Activated B cell treated with CpG ODN at 0.5 μM for 24 hours (primary cell): ENCODE measurements at regions of chr11 and their contacts with region 1.

Region 1: GRCh38 chr11:59158206-59159068 is 13.5 kb upstream of the DTX4 start:
- DNase-seq: no peak
- ATAC-seq: peak; percentile 99
- H3K4me3 Mint-ChIP-seq: peak overlapping the region; percentile 55
- H3K27ac Mint-ChIP-seq: peak overlapping the region; percentile 77
- H3K4me1 Mint-ChIP-seq: peaks cover 27% of the 10 kb centered on the region
- H3K27me3 Mint-ChIP-seq: no peaks in the 10 kb centered on the region
- CTCF ChIP-seq: no peak

Region 2: DNA sequence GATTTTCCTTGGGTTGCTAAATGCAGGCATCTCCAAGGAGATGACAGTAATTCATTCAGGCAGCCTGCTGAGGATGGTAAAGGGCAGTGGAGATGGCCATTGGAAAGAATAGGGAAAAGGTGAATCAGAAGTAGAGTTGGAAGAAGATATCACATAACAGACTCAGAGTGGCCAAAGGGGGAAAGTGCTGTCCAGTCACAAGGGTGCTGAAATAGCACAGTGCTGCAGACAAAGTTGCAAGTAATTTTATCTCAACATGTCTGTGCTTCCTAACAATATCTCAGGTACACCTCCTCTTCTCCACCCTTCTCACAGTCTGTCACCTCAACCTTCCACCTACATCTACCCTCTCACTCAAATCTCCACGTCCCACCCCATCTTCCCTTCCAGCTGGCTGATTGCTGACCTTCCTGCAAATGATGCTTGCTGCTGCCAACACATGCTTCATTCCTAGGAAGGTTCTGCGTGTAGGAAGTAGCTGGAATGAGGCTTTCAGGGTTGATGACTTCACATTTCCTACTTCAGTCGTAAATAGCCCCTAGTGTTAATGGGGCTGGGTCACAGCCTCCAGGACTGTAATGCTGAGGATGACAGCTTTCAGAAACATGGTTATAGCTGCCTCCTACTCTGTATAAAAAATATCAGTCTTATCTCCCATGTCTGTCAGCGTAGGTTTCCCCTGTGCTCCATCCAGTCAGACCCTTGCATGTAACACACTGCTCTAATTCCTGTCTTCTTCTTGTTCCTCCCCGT is 1273.0 kb before region 1 on chr11:
- CTCF ChIA-PET with region 1: no interaction called
- POLR2A ChIA-PET with region 1: no interaction called
- intact Hi-C with region 1: no loop called
- DNase-seq: no peak
- ATAC-seq: no peak
- H3K4me3 Mint-ChIP-seq: no peak overlapping the region
- H3K27ac Mint-ChIP-seq: no peak overlapping the region
- H3K4me1 Mint-ChIP-seq: no peaks in the 10 kb centered on the region
- H3K27me3 Mint-ChIP-seq: peaks cover 2% of the 10 kb centered on the region
- CTCF ChIP-seq: no peak

Region 3: DNA sequence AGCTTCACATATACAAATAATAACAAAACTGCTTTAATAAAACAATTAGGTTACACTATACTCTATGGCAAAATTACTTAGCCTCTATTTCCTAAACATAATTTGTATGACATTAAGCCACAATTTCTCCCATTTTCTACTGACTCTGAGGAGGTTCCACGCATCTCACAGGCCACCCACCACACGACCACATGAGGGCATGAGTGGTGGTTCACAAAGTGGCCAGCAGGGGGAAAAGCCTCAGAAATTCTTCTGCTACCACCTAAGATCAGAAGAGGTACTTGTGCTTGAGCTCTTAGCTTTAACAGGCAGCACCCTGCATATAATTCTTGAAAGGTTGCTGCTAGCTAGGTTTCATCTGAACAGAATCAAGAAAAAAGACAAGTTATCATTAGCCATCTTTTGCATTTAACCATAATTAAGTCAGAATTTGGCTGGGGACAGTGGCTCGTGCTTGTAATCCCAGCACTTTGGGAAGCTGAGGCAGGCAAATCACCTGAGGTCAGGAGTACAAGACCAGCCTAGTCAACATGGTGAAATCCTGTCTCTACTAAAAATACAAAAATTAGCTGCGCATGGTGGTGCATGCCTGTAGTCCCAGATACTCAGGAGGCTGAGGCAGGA is 590.4 kb before region 1 on chr11:
- CTCF ChIA-PET with region 1: interaction called, 19 read pairs
- POLR2A ChIA-PET with region 1: interaction called, 3 read pairs
- intact Hi-C with region 1: no loop called
- DNase-seq: peak; percentile 54
- ATAC-seq: peak; percentile 99
- H3K4me3 Mint-ChIP-seq: no peak overlapping the region
- H3K27ac Mint-ChIP-seq: peak overlapping the region; percentile 36
- H3K4me1 Mint-ChIP-seq: peaks cover 40% of the 10 kb centered on the region
- H3K27me3 Mint-ChIP-seq: no peaks in the 10 kb centered on the region
- CTCF ChIP-seq: peak; percentile 53

Region 4: DNA sequence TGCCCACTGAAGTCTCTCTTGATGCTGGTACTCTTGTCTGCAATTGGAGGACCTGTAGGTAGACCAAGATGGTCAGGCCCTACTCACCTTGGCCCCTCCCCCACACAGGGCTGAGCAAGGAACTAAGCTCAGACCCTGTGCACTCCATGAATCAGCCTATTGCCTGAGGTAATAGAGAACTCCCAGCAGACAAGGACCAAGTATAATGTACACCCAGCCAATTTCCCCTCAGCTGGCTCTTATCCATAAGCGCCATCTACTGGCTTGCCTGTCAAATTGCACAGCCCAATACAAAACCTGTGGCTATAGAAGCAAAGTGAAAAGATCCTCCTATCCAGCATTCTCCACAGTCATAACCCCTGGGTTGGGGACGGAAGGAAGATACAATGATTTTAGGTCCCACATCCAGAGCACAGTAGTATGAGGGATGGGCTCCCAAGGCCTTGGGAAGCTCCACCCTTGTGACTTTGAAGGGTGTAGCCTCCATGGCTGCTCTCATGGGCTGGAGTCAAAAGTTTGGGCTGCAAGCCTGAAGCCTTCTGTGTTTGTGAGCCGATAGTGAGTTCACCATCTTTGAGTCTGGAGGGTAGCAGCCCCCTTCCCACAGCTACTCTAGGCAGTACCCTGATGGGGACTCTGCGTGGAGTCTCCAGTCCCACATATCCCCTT is 369.9 kb before region 1 on chr11:
- CTCF ChIA-PET with region 1: interaction called, 7 read pairs
- POLR2A ChIA-PET with region 1: no interaction called
- intact Hi-C with region 1: loop called (anchors 5 kb)
- DNase-seq: no peak
- ATAC-seq: peak; percentile 73
- H3K4me3 Mint-ChIP-seq: no peak overlapping the region
- H3K27ac Mint-ChIP-seq: no peak overlapping the region
- H3K4me1 Mint-ChIP-seq: no peaks in the 10 kb centered on the region
- H3K27me3 Mint-ChIP-seq: peaks cover 3% of the 10 kb centered on the region
- CTCF ChIP-seq: no peak

Region 5: DNA sequence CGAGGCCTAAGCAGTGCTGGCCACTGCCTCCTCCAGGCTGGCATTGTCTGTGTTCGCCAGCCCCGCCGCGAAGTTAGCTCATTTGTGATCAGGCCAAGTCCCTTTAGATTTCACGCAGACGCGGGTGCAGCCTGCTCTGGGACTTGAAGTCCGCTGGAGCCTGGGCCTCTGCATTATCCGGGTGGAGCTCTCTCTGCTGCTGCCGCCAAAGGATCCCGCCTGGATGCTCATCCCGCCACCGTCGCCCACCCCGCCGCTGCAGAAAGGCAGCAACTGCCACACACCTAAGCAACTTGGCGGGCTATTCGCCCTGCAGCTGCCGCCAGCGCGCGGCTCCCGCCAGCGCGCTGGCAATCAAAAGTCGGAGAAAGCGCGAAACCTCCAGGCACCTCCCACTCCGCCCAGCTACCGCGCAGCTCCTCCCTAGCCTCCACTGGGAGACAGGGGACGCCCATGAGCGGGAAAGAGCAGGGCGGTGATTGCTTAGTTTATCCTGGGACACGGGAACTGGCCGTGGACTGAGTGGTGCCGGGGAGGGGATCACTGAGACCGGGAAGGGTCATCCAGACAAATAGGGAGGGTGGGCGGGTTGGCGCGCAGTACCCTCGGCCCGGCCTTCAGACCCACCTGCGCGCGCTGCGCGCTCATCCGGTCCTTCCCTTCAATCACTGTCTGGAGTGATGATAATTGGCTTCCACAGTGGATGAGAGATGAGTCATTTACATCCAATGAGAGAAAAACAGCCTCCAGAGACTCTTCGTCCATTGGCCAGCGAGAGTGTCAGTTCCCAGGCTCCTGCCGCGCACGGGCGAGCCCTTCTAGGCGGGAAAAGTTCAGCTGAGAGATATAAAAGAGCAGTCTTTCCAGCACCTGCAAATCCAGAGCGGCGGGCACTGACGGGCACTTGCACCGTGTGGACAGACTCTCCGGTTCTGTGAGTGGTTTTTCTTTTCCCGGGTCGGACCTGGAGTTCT is 51.8 kb before region 1 on chr11 and contains the start of gene FAM111B:
- CTCF ChIA-PET with region 1: interaction called, 10 read pairs
- POLR2A ChIA-PET with region 1: interaction called, 12 read pairs
- intact Hi-C with region 1: loop called (anchors 1 kb)
- DNase-seq: peak; percentile 43
- ATAC-seq: peak; percentile 33
- H3K4me3 Mint-ChIP-seq: peak within 1 kb of the TSS; percentile 94
- H3K27ac Mint-ChIP-seq: peak within 1 kb of the TSS; percentile 84
- H3K4me1 Mint-ChIP-seq: peaks cover 84% of the 10 kb centered on the region
- H3K27me3 Mint-ChIP-seq: no peaks in the 10 kb centered on the region
- CTCF ChIP-seq: no peak
- total RNA-seq, gene FAM111B: 48.0 and 49.1 TPM in 2 replicates

Region 6: GRCh38 chr11:59171508-59172322 is 13.3 kb after region 1 on chr11 and contains the start of gene DTX4:
- CTCF ChIA-PET with region 1: interaction called, 13 read pairs
- POLR2A ChIA-PET with region 1: interaction called, 8 read pairs
- intact Hi-C with region 1: no loop called
- DNase-seq: peak; percentile 82
- ATAC-seq: peak; percentile 78
- H3K4me3 Mint-ChIP-seq: peak within 1 kb of the TSS; percentile 96
- H3K27ac Mint-ChIP-seq: peak within 1 kb of the TSS; percentile 90
- H3K4me1 Mint-ChIP-seq: peaks cover 34% of the 10 kb centered on the region
- H3K27me3 Mint-ChIP-seq: no peaks in the 10 kb centered on the region
- CTCF ChIP-seq: no peak
- total RNA-seq, gene DTX4: 24.2 TPM in 2 replicates